ENCODE measurements at regions of chr10 and their contacts with region 1.

Region 1: GRCh38 chr10:1643161-1643907 is 94.0 kb downstream of the ADARB2 start:
- DNase-seq: peak; percentile 56
- ATAC-seq: peak; percentile 88
- H3K4me3 Mint-ChIP-seq: peak overlapping the region; percentile 28
- H3K27ac Mint-ChIP-seq: peak overlapping the region; percentile 93
- H3K4me1 Mint-ChIP-seq: peaks cover 16% of the 10 kb centered on the region
- H3K27me3 Mint-ChIP-seq: peaks cover 12% of the 10 kb centered on the region

Region 2: GRCh38 chr10:454860-455259 is 1188.5 kb before region 1 on chr10:
- CTCF ChIA-PET with region 1: no interaction called
- POLR2A ChIA-PET with region 1: no interaction called
- intact Hi-C with region 1: no loop called
- DNase-seq: peak; percentile 30
- ATAC-seq: peak; percentile 39
- H3K4me3 Mint-ChIP-seq: peak overlapping the region; percentile 30
- H3K27ac Mint-ChIP-seq: peak overlapping the region; percentile 82
- H3K4me1 Mint-ChIP-seq: peaks cover 43% of the 10 kb centered on the region
- H3K27me3 Mint-ChIP-seq: peaks cover 2% of the 10 kb centered on the region

Region 3: DNA sequence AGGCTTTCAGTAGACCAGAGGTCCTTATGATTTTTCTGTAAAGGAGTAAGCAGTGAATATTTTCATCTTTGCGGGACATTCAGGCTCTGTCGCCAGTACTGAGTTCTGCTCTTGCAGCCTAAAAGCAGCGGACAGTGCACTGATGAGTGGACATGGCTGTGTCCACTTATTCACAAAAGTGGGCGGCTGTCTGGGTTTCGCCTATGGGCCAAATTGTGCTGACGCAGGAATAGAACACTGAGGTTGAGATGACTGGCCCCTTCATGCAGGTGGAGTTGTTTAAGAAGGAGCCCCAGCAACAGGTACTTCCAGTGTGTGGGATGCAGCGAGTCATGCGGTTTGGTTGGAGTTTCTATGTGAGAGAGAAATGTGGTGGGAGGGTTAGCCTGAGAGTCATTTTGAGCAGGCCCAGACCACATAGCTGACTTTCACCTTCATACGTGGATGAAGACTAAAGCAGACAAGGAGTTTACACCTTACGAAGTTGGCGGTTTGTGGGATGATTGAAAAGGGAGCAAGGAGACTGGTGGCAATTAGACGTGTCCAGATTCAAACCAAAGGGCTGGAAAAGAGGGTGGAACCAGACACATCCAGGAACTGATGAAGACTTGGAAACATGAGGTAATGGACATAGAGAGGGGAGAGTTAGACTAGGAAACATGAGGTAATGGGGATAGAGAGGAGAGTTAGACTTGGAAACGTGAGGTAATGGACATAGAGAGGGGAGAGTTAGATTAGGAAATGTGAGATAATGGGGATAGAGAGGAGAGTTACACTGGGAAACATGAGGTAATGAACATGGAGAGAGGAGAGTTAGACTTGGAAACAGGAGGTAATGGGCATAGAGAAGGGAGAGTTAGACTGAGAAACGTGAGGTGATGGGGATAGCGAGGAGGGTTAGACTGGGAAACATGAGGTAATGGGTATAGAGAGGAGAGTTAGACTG is 548.9 kb before region 1 on chr10:
- CTCF ChIA-PET with region 1: no interaction called
- POLR2A ChIA-PET with region 1: no interaction called
- intact Hi-C with region 1: loop called in 1 of 2 experiments (anchors 1 kb)
- DNase-seq: peak; percentile 89
- ATAC-seq: peak; percentile 95
- H3K4me3 Mint-ChIP-seq: no peak overlapping the region
- H3K27ac Mint-ChIP-seq: no peak overlapping the region
- H3K4me1 Mint-ChIP-seq: peaks cover 4% of the 10 kb centered on the region
- H3K27me3 Mint-ChIP-seq: no peaks in the 10 kb centered on the region

Region 4: GRCh38 chr10:1661859-1662437 is 18.6 kb after region 1 on chr10:
- CTCF ChIA-PET with region 1: no interaction called
- POLR2A ChIA-PET with region 1: no interaction called
- intact Hi-C with region 1: no loop called
- DNase-seq: no peak
- ATAC-seq: no peak
- H3K4me3 Mint-ChIP-seq: no peak overlapping the region
- H3K27ac Mint-ChIP-seq: no peak overlapping the region
- H3K4me1 Mint-ChIP-seq: no peaks in the 10 kb centered on the region
- H3K27me3 Mint-ChIP-seq: peaks cover 15% of the 10 kb centered on the region

Measured in activated CD4-positive, alpha-beta T cell treated with anti-CD3 and anti-CD28 coated beads for 36 hours (primary cell).